MCF 10A (cell line): ENCODE measurements at regions of chr4 and their contacts with region 1.

Region 1: GRCh38 chr4:2281575-2282343 is 19.9 kb upstream of the MXD4 start:
- DNase-seq: peak; percentile 47
- H3K4me3 Mint-ChIP-seq: no peak overlapping the region
- H3K27ac Mint-ChIP-seq: no peak overlapping the region
- H3K4me1 Mint-ChIP-seq: no peaks in the 10 kb centered on the region
- H3K27me3 Mint-ChIP-seq: no peaks in the 10 kb centered on the region
- CTCF ChIP-seq: peak; percentile 8

Region 2: GRCh38 chr4:1856042-1856788 is 425.5 kb before region 1 on chr4 and contains the start of gene LETM1:
- CTCF ChIA-PET with region 1: no interaction called
- POLR2A ChIA-PET with region 1: no interaction called
- intact Hi-C with region 1: no loop called
- DNase-seq: peak; percentile 93
- H3K4me3 Mint-ChIP-seq: peak within 1 kb of the TSS; percentile 83
- H3K27ac Mint-ChIP-seq: peak within 1 kb of the TSS; percentile 79
- H3K4me1 Mint-ChIP-seq: peaks cover 26% of the 10 kb centered on the region
- H3K27me3 Mint-ChIP-seq: no peaks in the 10 kb centered on the region
- CTCF ChIP-seq: peak; percentile 8
- total RNA-seq, gene LETM1: 85.0 and 86.3 TPM in 2 replicates

Region 3: DNA sequence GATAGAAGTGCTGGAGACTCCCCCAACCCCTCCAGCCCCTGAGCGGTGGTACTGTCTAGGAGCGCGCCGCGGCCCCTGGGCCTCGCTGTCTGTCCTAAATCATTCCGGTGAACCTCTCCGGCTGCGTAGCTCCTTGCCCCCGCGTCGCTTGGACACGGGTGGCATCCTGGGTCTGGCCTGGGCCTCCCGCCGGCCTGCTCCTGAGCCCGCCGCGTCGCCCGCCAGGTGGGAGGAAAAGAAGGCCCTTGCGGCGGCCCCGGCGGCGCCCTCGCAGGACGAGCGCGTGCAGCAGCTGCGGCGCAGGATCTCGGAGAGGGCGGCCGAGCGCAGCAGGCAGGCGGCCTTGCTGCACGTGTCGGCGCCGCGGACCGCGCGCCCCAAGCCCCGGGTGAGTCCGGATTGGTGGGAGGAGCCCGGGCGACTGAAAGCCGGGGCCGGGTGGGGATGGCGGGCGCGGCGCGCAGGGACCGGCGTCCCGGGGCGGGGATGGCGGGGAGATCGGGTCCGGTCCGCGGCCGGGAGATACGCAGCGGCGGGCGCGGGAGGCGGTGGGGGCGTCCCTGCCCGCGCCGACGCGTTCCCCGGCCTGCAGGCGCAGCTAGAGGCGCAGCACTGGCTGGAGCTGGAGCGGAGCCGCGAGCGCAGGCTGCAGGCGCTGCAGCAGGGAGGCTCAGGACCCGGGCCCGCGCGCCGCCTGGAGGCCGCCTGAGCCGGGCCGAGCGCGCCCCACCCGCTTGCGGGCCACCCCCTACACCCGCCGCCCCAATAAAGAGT is 180.6 kb after region 1 on chr4:
- CTCF ChIA-PET with region 1: no interaction called
- POLR2A ChIA-PET with region 1: no interaction called
- intact Hi-C with region 1: loop called (anchors 5 kb)
- DNase-seq: peak; percentile 52
- H3K4me3 Mint-ChIP-seq: peak overlapping the region; percentile 70
- H3K27ac Mint-ChIP-seq: no peak overlapping the region
- H3K4me1 Mint-ChIP-seq: peaks cover 6% of the 10 kb centered on the region
- H3K27me3 Mint-ChIP-seq: no peaks in the 10 kb centered on the region
- CTCF ChIP-seq: peak; percentile 48

Region 4: GRCh38 chr4:3201718-3202702 is 920.3 kb after region 1 on chr4:
- CTCF ChIA-PET with region 1: no interaction called
- POLR2A ChIA-PET with region 1: no interaction called
- intact Hi-C with region 1: no loop called
- DNase-seq: no peak
- H3K4me3 Mint-ChIP-seq: no peak overlapping the region
- H3K27ac Mint-ChIP-seq: no peak overlapping the region
- H3K4me1 Mint-ChIP-seq: no peaks in the 10 kb centered on the region
- H3K27me3 Mint-ChIP-seq: no peaks in the 10 kb centered on the region
- CTCF ChIP-seq: no peak